Heart left ventricle (tissue), 16 donors: ENCODE measurements at regions of chr6 and their contacts with region 1.

Region 1: GRCh38 chr6:1686117-1687098 is 76.7 kb downstream of the FOXC1 start:
- DNase-seq: peak in 3 of 5 donors; percentile 25 to 49 (median 38)
- ATAC-seq: peak; percentile 48 to 87 (median 84)
- H3K4me3 ChIP-seq: no peak overlapping the region
- H3K27ac ChIP-seq: peak overlapping the region in 6 of 12 donors; percentile 13 to 59 (median 34)
- H3K4me1 ChIP-seq: peaks cover 0 to 17% (median 13%) of the 10 kb centered on the region in 12 donors
- H3K27me3 ChIP-seq: no peaks in the 10 kb centered on the region
- CTCF ChIP-seq: peak in 10 of 12 donors; percentile 13 to 52 (median 32)
- POLR2A ChIP-seq: no peak

Region 2: DNA sequence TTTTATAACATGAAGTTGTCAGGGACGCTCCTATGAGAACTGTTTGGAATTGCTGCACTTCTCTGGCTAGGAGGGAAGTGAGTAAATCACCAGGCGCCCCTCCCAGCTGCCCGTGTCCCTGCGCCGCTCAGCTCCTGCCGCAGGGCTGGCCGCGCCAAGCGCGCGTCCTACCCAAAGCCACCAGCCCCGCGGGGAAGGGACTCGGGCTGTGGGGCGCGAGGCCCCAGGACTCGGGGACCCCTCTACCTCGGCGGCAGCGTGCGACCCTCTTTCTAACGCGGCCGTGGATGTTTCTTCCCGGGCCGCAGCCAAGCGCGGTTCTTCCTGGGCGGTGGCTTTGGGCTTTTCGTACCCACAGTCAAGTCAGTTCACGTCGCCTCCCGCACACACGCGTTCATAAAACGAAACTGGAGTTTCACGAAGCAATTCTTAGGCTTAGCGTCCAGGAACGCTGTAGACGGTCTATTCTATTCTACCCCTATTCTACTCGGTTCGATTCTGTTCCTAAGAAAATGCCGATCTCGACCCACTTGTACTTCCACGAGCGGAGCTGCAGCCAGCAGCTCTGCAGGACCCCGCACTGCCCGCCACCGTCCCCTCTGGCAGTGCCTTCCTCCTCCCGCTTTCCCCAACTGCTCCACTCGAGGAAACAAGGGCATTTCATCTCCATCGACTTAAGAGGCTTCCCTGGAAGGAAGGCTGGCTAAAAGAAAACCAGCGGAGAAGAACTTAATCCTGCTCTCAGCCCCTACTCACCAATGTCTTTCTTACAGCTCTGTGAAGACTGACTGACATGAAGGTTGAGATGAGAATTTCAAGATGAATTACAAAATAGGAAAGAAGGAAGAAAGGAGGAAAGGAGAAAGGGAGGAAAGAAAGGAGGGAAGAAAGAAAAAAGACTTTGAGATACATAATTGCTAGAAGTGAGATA is 61.3 kb before region 1 on chr6:
- intact Hi-C with region 1: loop called in 1 of 10 experiments (anchors 5 kb)
- DNase-seq: peak in 1 of 5 donors; percentile 41
- ATAC-seq: peak; percentile 57 to 83 (median 82)
- H3K4me3 ChIP-seq: peak overlapping the region; percentile 34 to 86 (median 64)
- H3K27ac ChIP-seq: peak overlapping the region in 11 of 12 donors; percentile 41 to 90 (median 73)
- H3K4me1 ChIP-seq: peaks cover 0 to 24% (median 11%) of the 10 kb centered on the region in 12 donors
- H3K27me3 ChIP-seq: peaks cover 0 to 65% (median 36%) of the 10 kb centered on the region in 9 donors
- CTCF ChIP-seq: no peak
- POLR2A ChIP-seq: no peak

Region 3: DNA sequence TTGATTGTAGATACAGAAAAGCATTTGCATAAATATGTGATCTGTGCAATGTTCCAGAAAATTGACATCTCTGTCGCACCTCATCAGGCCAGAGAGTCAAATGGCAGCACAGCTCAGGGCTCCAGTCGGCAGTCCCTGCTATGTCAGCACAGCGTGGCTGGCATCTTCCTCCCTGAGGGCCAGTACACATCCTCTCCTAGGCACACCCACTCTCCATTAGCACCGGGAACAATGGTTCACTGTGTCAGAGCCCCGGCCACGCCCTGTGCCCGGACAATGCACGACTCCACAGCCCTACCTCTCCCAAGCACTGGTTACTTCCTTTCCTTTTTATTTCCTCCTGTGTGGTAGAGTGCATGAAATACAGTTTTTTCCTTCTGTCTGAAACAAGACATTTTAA is 38.2 kb after region 1 on chr6:
- intact Hi-C with region 1: loop called in 1 of 10 experiments (anchors 5 kb)
- DNase-seq: peak; percentile 63 to 84 (median 74)
- ATAC-seq: peak; percentile 90 to 99 (median 96)
- H3K4me3 ChIP-seq: no peak overlapping the region
- H3K27ac ChIP-seq: peak overlapping the region in 11 of 12 donors; percentile 15 to 82 (median 59)
- H3K4me1 ChIP-seq: peaks cover 0 to 16% (median 4%) of the 10 kb centered on the region in 12 donors
- H3K27me3 ChIP-seq: no peaks in the 10 kb centered on the region
- CTCF ChIP-seq: no peak
- POLR2A ChIP-seq: no peak

Region 4: DNA sequence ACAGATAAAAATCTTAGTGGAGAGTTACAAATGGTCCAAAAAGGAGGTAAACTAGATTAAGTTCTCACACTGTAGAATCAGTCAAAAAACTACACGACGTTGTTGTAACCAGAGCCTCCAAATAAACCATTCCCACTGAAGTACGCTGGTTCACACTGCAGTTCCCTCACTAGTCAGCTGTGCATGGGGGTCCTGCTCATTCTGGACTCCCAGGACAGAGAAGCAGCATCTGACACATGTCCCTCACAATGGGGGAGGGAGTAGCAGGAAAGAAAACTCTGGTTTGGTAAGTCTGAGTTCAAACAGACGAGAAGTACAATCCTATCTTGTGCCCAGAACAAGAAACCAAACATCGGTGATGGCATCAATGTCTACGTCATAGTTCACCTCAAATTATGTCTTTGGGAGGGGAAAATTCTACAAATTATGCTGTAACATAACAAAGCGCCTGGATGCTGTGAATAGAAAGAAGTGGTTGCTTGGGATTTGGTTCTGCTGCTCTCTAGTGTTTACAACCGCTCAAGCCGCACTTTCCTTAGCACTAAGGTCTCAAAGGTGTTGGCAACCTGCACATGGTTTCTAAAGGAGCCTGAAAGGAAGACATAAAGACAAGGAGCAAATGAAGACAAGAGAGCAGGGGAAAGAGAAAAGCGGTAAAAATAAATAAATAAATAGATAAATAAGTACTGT is 351.0 kb after region 1 on chr6:
- intact Hi-C with region 1: loop called in 1 of 10 experiments (anchors 10 kb)
- DNase-seq: no peak
- ATAC-seq: no peak
- H3K4me3 ChIP-seq: no peak overlapping the region
- H3K27ac ChIP-seq: no peak overlapping the region
- H3K4me1 ChIP-seq: no peaks in the 10 kb centered on the region
- H3K27me3 ChIP-seq: no peaks in the 10 kb centered on the region
- CTCF ChIP-seq: peak in 5 of 12 donors; percentile 9 to 23 (median 21)
- POLR2A ChIP-seq: no peak